ENCODE measurements at regions of chr11 and their contacts with region 1.

Region 1: GRCh38 chr11:45964911-45965389 is 42.5 kb downstream of the LARGE2 start:
- H3K4me3 ChIP-seq: no peak overlapping the region
- H3K27ac ChIP-seq: no peak overlapping the region
- H3K4me1 ChIP-seq: no peaks in the 10 kb centered on the region
- CTCF ChIP-seq: peak; percentile 67

Region 2: GRCh38 chr11:45339729-45340519 is 625.0 kb before region 1 on chr11:
- CTCF ChIA-PET with region 1: no interaction called
- POLR2A ChIA-PET with region 1: no interaction called
- H3K4me3 ChIP-seq: no peak overlapping the region
- H3K27ac ChIP-seq: no peak overlapping the region
- H3K4me1 ChIP-seq: no peaks in the 10 kb centered on the region
- CTCF ChIP-seq: peak; percentile 82

Region 3: GRCh38 chr11:45930031-45930794 is 34.7 kb before region 1 on chr11:
- CTCF ChIA-PET with region 1: interaction called, 11 read pairs
- POLR2A ChIA-PET with region 1: no interaction called
- H3K4me3 ChIP-seq: no peak overlapping the region
- H3K27ac ChIP-seq: no peak overlapping the region
- H3K4me1 ChIP-seq: no peaks in the 10 kb centered on the region
- CTCF ChIP-seq: no peak

Region 4: GRCh38 chr11:45949992-45950407 is 14.9 kb before region 1 on chr11:
- CTCF ChIA-PET with region 1: interaction called, 13 read pairs
- POLR2A ChIA-PET with region 1: no interaction called
- H3K4me3 ChIP-seq: no peak overlapping the region
- H3K27ac ChIP-seq: no peak overlapping the region
- H3K4me1 ChIP-seq: no peaks in the 10 kb centered on the region
- CTCF ChIP-seq: no peak

Region 5: GRCh38 chr11:45982656-45983470 is 17.9 kb after region 1 on chr11:
- CTCF ChIA-PET with region 1: interaction called, 27 read pairs
- POLR2A ChIA-PET with region 1: interaction called, 4 read pairs
- H3K4me3 ChIP-seq: no peak overlapping the region
- H3K27ac ChIP-seq: no peak overlapping the region
- H3K4me1 ChIP-seq: peaks cover 5% of the 10 kb centered on the region
- CTCF ChIP-seq: no peak

Region 6: GRCh38 chr11:45993531-45994001 is 28.6 kb after region 1 on chr11:
- CTCF ChIA-PET with region 1: interaction called, 33 read pairs
- POLR2A ChIA-PET with region 1: no interaction called
- H3K4me3 ChIP-seq: no peak overlapping the region
- H3K27ac ChIP-seq: no peak overlapping the region
- H3K4me1 ChIP-seq: no peaks in the 10 kb centered on the region
- CTCF ChIP-seq: no peak

Region 7: GRCh38 chr11:46015666-46016340 is 50.9 kb after region 1 on chr11:
- CTCF ChIA-PET with region 1: interaction called, 13 read pairs
- POLR2A ChIA-PET with region 1: no interaction called
- H3K4me3 ChIP-seq: no peak overlapping the region
- H3K27ac ChIP-seq: no peak overlapping the region
- H3K4me1 ChIP-seq: no peaks in the 10 kb centered on the region
- CTCF ChIP-seq: no peak

Measured in HEK293 (cell line).